ENCODE measurements at regions of chr12 and their contacts with region 1.

Region 1: GRCh38 chr12:40587421-40587820 is 104.8 kb upstream of the CNTN1 start:
- DNase-seq: no peak
- H3K4me3 ChIP-seq: no peak overlapping the region
- H3K4me3 Mint-ChIP-seq: no peak overlapping the region
- H3K27ac Mint-ChIP-seq: no peak overlapping the region
- H3K4me1 ChIP-seq: no peaks in the 10 kb centered on the region
- H3K4me1 Mint-ChIP-seq: no peaks in the 10 kb centered on the region
- H3K27me3 ChIP-seq: no peaks in the 10 kb centered on the region
- H3K27me3 Mint-ChIP-seq: no peaks in the 10 kb centered on the region
- CTCF ChIP-seq: no peak

Region 2: DNA sequence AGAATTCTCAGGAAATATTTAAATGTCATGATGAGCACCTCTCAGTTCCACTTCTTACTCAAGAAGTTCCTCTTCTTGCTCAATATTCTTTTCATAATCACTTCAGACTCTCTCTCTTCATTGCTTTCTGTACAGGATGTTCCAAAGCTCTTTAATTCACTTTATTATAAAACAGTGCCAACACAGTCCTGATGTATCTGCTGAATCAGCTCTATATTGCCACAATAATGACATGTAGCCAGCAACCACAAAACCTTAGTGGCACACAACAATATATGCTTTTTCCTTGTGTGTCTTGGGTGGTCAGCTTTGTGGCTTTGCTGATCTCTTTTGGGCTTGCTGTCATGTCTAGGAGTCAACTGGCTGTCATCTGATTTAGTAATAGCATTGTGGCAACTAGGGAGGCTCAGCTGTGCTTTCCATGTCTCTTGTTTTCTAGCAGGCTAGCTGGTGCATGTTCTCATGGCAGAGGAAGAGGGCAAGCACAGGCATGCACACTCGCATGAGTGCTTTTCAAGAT is 428.8 kb before region 1 on chr12:
- CTCF ChIA-PET with region 1: no interaction called
- POLR2A ChIA-PET with region 1: no interaction called
- intact Hi-C with region 1: no loop called
- DNase-seq: no peak
- H3K4me3 ChIP-seq: no peak overlapping the region
- H3K4me3 Mint-ChIP-seq: no peak overlapping the region
- H3K27ac Mint-ChIP-seq: no peak overlapping the region
- H3K4me1 ChIP-seq: no peaks in the 10 kb centered on the region
- H3K4me1 Mint-ChIP-seq: no peaks in the 10 kb centered on the region
- H3K27me3 ChIP-seq: no peaks in the 10 kb centered on the region
- H3K27me3 Mint-ChIP-seq: no peaks in the 10 kb centered on the region
- CTCF ChIP-seq: no peak

Region 3: GRCh38 chr12:40342010-40342409 is 245.4 kb before region 1 on chr12:
- CTCF ChIA-PET with region 1: no interaction called
- POLR2A ChIA-PET with region 1: no interaction called
- intact Hi-C with region 1: loop called (anchors 10 kb)
- DNase-seq: no peak
- H3K4me3 ChIP-seq: no peak overlapping the region
- H3K4me3 Mint-ChIP-seq: no peak overlapping the region
- H3K27ac Mint-ChIP-seq: no peak overlapping the region
- H3K4me1 ChIP-seq: no peaks in the 10 kb centered on the region
- H3K4me1 Mint-ChIP-seq: no peaks in the 10 kb centered on the region
- H3K27me3 ChIP-seq: no peaks in the 10 kb centered on the region
- H3K27me3 Mint-ChIP-seq: peaks cover 5% of the 10 kb centered on the region
- CTCF ChIP-seq: no peak

Region 4: GRCh38 chr12:40622246-40622838 is 34.9 kb after region 1 on chr12:
- CTCF ChIA-PET with region 1: no interaction called
- POLR2A ChIA-PET with region 1: no interaction called
- intact Hi-C with region 1: no loop called
- DNase-seq: peak in 1 of 2 experiments; percentile 56
- H3K4me3 ChIP-seq: no peak overlapping the region
- H3K4me3 Mint-ChIP-seq: no peak overlapping the region
- H3K27ac Mint-ChIP-seq: no peak overlapping the region
- H3K4me1 ChIP-seq: no peaks in the 10 kb centered on the region
- H3K4me1 Mint-ChIP-seq: no peaks in the 10 kb centered on the region
- H3K27me3 ChIP-seq: no peaks in the 10 kb centered on the region
- H3K27me3 Mint-ChIP-seq: peaks cover 4% of the 10 kb centered on the region
- CTCF ChIP-seq: peak; percentile 77 to 85

Region 5: DNA sequence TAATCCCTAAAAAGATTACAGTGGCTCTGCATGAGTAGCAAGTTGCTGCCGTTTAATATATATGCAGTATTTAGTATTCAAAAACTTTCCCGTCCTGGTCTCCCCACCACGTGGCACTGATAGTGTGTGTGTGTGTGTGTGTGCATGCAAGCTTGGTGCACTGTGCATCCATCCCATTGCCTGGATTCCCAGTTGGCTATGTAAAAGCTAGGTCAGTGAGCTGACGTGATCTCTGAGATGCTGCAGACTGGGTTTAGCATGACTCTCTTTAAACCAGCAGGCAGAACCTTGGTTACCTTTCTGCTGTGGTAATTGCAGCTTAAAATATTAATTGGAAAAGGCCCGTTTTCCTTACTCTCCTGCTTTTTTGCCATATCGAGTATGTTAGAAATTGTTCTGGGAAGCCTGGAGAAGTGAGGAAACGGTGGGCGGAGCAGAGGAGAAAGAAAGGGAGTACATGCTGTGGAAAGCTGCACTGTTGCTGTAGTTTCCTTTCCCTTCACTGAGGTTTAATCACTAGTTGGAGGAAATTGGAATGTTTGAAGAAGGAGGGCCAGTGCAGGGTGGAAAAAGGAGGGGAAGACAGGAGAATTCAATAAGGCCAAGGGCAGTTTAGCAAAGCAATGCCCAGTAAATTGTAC is 100.8 kb after region 1 on chr12:
- CTCF ChIA-PET with region 1: no interaction called
- POLR2A ChIA-PET with region 1: no interaction called
- intact Hi-C with region 1: no loop called
- DNase-seq: no peak
- H3K4me3 ChIP-seq: no peak overlapping the region
- H3K4me3 Mint-ChIP-seq: no peak overlapping the region
- H3K27ac Mint-ChIP-seq: no peak overlapping the region
- H3K4me1 ChIP-seq: no peaks in the 10 kb centered on the region
- H3K4me1 Mint-ChIP-seq: no peaks in the 10 kb centered on the region
- H3K27me3 ChIP-seq: no peaks in the 10 kb centered on the region
- H3K27me3 Mint-ChIP-seq: no peaks in the 10 kb centered on the region
- CTCF ChIP-seq: no peak